ENCODE measurements at regions of chr9 and their contacts with region 1.

Region 1: DNA sequence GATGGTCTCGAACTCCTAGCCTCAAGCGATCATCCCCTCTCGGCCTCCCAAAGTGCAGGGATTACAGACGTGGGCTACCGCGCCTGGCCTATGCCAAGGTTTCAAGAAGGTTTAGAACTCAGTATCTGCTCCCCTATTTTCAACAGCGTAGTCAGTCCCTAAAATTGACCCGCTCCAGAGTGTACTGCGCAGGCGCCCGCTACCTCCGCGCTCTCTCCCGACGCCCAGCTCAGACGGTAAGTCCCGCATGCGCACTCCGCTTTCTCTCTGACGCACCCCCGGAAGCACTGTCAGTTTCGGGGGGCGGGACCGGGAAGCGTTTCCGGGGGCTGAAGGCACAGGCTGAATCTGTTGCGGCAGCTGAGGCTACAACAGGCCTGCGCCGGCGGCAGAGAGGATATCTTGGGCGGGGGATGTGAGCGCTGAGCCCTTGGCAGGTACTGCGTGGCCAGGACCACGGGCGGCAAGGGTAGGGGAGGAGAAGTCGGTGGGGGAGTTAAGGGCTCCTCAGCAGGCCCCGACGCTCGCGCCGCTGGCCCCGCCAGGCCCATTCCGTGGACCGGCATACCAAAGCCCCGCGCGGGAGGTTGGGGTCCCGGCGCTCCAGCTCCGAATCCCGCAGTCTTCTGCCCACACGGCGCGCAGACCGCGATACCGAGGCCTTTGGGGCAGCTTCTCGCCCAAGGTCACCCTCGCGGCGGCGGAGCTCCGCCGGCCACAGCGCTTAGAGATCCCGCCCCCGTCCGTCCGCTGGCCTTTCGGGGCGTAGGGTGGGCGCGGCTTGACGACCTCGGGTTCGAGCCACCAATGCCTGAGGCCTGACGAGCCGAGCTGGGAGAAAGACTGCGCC is at the start of gene ZBTB43:
- DNase-seq: peak; percentile 95 to 98 (median 98)
- ATAC-seq: peak; percentile 90
- H3K4me3 ChIP-seq: peak within 1 kb of the TSS; percentile 72
- H3K4me3 Mint-ChIP-seq: peak within 1 kb of the TSS; percentile 81 to 99 (median 97)
- H3K27ac ChIP-seq: peak within 1 kb of the TSS; percentile 83
- H3K27ac Mint-ChIP-seq: peak within 1 kb of the TSS; percentile 91 to 99 (median 95)
- H3K4me1 ChIP-seq: peaks cover 10 to 17% of the 10 kb centered on the region in 2 donors
- H3K4me1 Mint-ChIP-seq: peaks cover 32 to 50% (median 41%) of the 10 kb centered on the region in 7 donors
- H3K27me3 ChIP-seq: no peaks in the 10 kb centered on the region
- H3K27me3 Mint-ChIP-seq: peaks cover 0 to 3% (median 0%) of the 10 kb centered on the region in 5 donors
- total RNA-seq, gene ZBTB43: 17.8 to 31.4 (median 28.2) TPM

Region 2: DNA sequence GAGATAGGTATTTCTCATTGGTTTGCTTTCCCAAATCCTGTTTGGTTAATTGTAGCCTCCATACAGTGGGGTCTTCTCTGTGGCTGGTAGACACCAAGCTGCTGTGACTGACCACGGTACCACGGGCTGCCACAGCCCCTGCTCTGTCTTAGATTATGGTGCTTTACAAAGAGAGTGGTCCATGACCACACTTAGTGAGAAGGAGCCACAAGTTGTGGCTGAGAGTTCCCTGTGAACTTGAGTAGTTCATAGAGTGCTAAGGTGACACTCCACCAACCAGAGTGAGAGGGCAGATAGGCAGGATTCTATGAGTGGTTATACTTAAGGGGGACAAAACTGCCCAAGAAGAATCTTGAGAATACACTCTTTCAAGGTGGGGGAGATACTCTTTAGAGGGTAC is 29.8 kb after region 1 on chr9:
- CTCF ChIA-PET with region 1: no interaction called
- POLR2A ChIA-PET with region 1: no interaction called
- intact Hi-C with region 1: loop called in 1 of 2 experiments (anchors 1 kb)
- DNase-seq: no peak
- ATAC-seq: no peak
- H3K4me3 ChIP-seq: no peak overlapping the region
- H3K4me3 Mint-ChIP-seq: no peak overlapping the region
- H3K27ac ChIP-seq: no peak overlapping the region
- H3K27ac Mint-ChIP-seq: peak overlapping the region in 2 of 9 donors; percentile 27 to 42
- H3K4me1 ChIP-seq: no peaks in the 10 kb centered on the region
- H3K4me1 Mint-ChIP-seq: peaks cover 15 to 47% (median 38%) of the 10 kb centered on the region in 7 donors
- H3K27me3 ChIP-seq: no peaks in the 10 kb centered on the region
- H3K27me3 Mint-ChIP-seq: no peaks in the 10 kb centered on the region

Region 3: DNA sequence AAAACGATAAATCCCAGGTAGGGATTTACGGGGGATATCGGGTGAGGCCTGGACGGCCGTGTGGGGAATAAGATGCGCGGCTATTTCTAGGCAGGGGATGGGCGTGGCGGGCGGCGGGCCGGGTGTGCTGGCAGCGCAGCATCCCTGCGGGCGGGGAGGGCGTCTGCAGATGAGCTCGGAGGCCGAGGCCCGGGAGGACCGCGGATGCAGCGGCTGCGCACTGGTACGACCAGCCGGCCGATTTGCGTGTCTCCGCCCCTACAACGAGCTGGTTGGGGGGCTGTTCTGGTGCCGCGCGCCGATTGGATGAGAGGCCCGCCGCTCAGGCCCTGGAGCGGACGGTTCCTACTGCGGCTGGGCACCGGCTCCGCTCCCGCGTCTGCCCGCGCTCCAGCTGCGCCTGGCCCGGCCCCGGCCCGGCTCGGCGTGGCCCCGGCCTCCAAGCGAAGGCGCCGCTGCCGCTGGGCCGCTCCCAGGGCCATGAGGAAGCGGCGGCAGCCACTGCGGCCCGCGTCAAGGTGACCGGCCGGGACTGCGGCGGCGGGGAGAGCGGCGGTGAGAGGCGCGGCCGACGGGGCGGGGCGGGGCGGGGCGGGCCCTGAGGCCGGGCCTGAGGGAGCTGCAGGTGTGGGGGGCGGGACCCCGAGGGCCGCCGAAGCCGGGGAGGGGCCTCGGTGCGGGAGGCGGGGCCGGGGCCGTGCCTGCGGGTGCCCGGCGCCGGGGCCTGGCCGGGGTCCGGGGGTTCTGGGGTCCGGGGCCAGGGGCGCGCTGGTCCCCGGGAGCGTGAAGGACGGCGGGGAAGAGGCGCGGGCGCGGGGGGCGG is 109.7 kb after region 1 on chr9 and contains the start of gene RALGPS1:
- CTCF ChIA-PET with region 1: no interaction called
- POLR2A ChIA-PET with region 1: no interaction called
- intact Hi-C with region 1: loop called in 1 of 2 experiments (anchors 1 kb)
- DNase-seq: peak; percentile 68 to 88 (median 81)
- ATAC-seq: peak; percentile 98
- H3K4me3 ChIP-seq: peak within 1 kb of the TSS; percentile 47
- H3K4me3 Mint-ChIP-seq: peak within 1 kb of the TSS; percentile 73 to 90 (median 82)
- H3K27ac ChIP-seq: peak within 1 kb of the TSS; percentile 13
- H3K27ac Mint-ChIP-seq: peak within 1 kb of the TSS in 6 of 9 donors; percentile 14 to 89 (median 75)
- H3K4me1 ChIP-seq: no peaks in the 10 kb centered on the region
- H3K4me1 Mint-ChIP-seq: peaks cover 5 to 13% (median 7%) of the 10 kb centered on the region in 7 donors
- H3K27me3 ChIP-seq: no peaks in the 10 kb centered on the region
- H3K27me3 Mint-ChIP-seq: peaks cover 0 to 36% (median 0%) of the 10 kb centered on the region in 5 donors
- total RNA-seq, gene RALGPS1: 2.6 to 8.3 (median 5.8) TPM